Heart right ventricle (tissue), 16 donors: ENCODE measurements at regions of chr3 and their contacts with region 1.

Region 1: GRCh38 chr3:52552089-52552488 is 15.7 kb downstream of the UQCC5 start:
- DNase-seq: no peak
- ATAC-seq: peak in 1 of 8 donors; percentile 38
- H3K4me3 ChIP-seq: no peak overlapping the region
- H3K27ac ChIP-seq: peak overlapping the region in 2 of 10 donors; percentile 7 to 33
- H3K4me1 ChIP-seq: peaks cover 0 to 33% (median 7%) of the 10 kb centered on the region in 9 donors
- H3K27me3 ChIP-seq: no peaks in the 10 kb centered on the region
- CTCF ChIP-seq: no peak

Region 2: GRCh38 chr3:52606373-52607085 is 54.4 kb after region 1 on chr3:
- intact Hi-C with region 1: loop called in 1 of 10 experiments (anchors 10 kb)
- DNase-seq: peak in 1 of 2 donors; percentile 28
- ATAC-seq: peak; percentile 49 to 90 (median 72)
- H3K4me3 ChIP-seq: no peak overlapping the region
- H3K27ac ChIP-seq: peak overlapping the region in 4 of 10 donors; percentile 23 to 41 (median 32)
- H3K4me1 ChIP-seq: peaks cover 0 to 30% (median 11%) of the 10 kb centered on the region in 9 donors
- H3K27me3 ChIP-seq: no peaks in the 10 kb centered on the region
- CTCF ChIP-seq: no peak